ENCODE measurements at regions of chr1 and their contacts with region 1.

Region 1: DNA sequence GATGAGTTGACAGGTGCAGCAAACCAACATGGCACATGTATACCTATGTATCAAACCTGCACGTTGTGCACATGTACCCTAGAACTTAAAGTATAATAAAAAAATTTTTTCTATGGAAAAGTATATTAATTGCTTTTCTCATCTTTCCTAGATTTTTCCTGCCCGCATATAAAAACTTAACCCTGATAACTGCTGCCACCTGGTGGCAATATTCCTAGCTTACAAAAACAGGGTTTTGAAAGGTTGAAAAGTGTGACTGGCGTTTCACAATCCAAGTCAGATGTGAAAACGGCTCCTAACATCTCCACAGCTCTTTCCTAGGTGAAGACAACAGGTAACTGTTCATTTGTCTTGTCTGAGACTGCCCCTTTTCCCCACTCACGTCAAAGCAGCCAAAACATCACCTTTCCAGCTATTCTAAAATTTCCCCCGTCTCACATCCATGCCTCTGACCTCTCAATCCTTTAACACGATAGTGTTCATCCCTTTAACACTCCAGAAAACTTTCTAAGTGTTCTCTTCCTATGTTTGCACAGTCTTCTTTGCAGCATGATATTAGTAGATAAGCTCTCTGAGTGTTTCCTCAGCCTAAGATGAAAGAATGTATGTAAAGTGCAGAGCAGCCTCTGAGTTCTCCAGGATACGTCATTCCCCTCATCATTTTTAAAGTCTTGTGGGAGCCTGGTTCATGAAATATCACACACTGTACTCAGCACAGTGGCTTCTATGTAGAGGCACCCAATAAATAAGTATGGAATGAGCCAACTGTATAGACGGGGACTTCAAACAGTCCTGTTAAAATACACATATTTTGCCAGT is 27.5 kb downstream of the OVGP1 start:
- DNase-seq: no peak
- H3K4me3 ChIP-seq: no peak overlapping the region
- H3K27ac ChIP-seq: no peak overlapping the region
- H3K27me3 ChIP-seq: peaks cover 33% of the 10 kb centered on the region
- CTCF ChIP-seq: peak; percentile 75

Region 2: DNA sequence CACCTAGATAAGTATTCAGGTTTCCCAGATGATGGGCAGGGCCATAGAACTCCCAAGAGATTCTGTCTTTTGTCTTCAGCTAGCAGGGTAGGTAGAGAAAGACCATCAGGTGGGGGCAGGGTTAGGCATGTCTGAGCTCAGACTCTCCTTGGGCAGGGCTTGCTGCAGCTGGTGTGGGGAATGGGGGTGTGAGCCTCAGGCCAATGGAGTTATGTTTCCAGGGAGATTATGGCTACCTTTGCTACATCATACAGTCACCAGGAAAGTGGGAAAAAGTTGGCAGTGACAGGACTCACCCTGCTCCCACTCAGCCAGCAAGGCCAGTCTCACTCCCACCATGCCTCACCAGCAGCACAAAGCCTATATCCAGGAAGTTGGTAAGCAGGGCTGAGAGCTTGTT is 337.9 kb before region 1 on chr1:
- CTCF ChIA-PET with region 1: no interaction called
- POLR2A ChIA-PET with region 1: no interaction called
- DNase-seq: no peak
- H3K4me3 ChIP-seq: no peak overlapping the region
- H3K27ac ChIP-seq: no peak overlapping the region
- H3K27me3 ChIP-seq: no peaks in the 10 kb centered on the region
- CTCF ChIP-seq: no peak

Region 3: DNA sequence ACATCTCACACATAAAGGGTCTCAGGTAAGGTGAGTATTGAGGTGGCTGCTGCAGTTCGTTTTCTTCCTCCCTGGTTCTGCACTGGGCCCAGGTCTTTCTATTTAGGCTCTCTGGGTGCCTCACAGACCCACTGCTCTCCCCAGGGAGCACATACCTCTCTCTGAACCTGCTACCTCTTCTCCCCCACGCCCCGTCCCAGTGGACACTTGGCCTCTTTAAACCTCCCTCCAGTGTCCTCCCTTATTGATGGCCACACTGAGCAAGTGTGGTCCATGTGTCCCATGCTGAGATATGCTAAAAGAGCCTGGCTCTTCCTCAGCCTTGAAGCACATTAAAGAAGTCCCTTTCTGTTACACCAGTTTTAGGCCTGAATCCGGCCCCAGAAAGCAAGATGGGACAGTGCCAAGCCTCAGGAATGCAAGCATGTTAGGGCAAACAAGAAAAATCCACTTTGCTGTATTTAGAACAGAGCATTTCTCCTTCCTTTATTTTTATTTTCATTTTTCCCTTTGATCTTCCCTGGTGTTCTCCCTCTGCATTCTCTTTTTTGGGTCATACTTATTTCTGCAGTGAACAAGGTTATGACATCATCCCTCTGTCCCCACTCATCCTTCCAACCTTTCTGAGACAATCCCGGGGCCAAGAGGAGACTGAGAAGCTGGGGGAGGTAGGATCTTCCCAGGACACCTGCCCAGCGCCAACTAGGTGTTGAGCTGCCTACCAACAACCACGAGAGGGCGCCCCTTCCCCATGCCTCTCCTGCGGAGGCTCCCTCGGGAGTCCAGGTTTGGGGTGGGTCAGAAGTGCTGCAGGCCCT is 177.5 kb before region 1 on chr1:
- CTCF ChIA-PET with region 1: interaction called, 80 read pairs
- POLR2A ChIA-PET with region 1: no interaction called
- DNase-seq: no peak
- H3K4me3 ChIP-seq: no peak overlapping the region
- H3K27ac ChIP-seq: no peak overlapping the region
- H3K27me3 ChIP-seq: no peaks in the 10 kb centered on the region
- CTCF ChIP-seq: peak; percentile 97

Region 4: GRCh38 chr1:111417755-111418154 is 17.8 kb after region 1 on chr1:
- CTCF ChIA-PET with region 1: interaction called, 40 read pairs
- POLR2A ChIA-PET with region 1: no interaction called
- DNase-seq: peak; percentile 50
- H3K4me3 ChIP-seq: no peak overlapping the region
- H3K27ac ChIP-seq: no peak overlapping the region
- H3K27me3 ChIP-seq: peaks cover 6% of the 10 kb centered on the region
- CTCF ChIP-seq: no peak

Region 5: GRCh38 chr1:111441573-111442192 is 41.7 kb after region 1 on chr1:
- CTCF ChIA-PET with region 1: interaction called, 12 read pairs
- POLR2A ChIA-PET with region 1: no interaction called
- DNase-seq: no peak
- H3K4me3 ChIP-seq: no peak overlapping the region
- H3K27ac ChIP-seq: no peak overlapping the region
- H3K27me3 ChIP-seq: no peaks in the 10 kb centered on the region
- CTCF ChIP-seq: peak; percentile 66

Region 6: GRCh38 chr1:111648806-111649205 is 248.8 kb after region 1 on chr1:
- CTCF ChIA-PET with region 1: no interaction called
- POLR2A ChIA-PET with region 1: no interaction called
- DNase-seq: no peak
- H3K4me3 ChIP-seq: no peak overlapping the region
- H3K27ac ChIP-seq: no peak overlapping the region
- H3K27me3 ChIP-seq: no peaks in the 10 kb centered on the region
- CTCF ChIP-seq: no peak

Measured in AG04450 (cell line).